Activated CD4-positive, alpha-beta memory T cell treated with anti-CD3 and anti-CD28 coated beads for 36 hours (primary cell): ENCODE measurements at regions of chr11 and their contacts with region 1.

Region 1: DNA sequence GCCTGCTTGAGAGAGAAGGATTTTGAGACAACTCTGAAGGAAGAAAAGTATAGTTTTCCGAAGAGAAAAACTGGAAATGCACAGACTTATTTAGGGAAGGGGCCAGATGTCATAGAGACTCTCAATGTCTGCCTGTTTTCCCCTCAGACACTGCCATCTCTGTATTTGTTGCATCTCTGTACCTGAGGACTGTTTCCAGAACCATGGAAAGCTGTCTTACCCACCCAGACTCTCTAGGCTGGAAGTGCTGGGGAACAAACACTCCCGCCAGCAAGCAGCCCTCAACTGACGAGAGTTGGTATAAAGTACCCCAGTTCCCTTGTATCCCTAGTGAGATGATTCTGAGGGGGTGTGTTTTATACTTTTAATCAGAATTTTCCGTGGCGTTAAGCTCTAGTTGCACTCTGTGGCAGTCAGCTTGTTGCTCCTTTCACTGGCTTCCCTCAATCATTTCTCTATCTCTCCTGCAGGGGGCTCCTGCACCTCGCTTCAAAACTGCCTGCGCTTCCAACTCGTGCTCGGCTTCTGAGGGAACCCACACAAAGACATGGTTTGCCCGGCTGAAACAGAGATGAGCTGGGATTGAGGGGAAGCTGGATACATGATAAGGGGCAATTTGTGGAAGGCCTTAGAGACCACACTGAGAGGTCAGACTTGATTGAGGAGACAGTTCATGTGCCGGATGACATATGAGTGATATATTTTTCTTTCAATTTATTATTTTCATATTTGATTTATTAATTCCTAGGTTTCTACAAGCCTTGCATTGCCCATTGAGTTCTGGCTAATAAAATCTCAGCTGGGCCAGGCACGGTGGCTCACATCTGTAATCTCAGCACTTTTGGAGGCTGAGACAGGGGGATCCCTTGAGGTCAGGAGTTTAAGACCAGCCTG is 36.9 kb upstream of the CLPB start:
- DNase-seq: peak; percentile 70
- H3K4me3 Mint-ChIP-seq: peak overlapping the region; percentile 25
- H3K27ac Mint-ChIP-seq: no peak overlapping the region
- H3K4me1 Mint-ChIP-seq: peaks cover 2% of the 10 kb centered on the region
- H3K27me3 Mint-ChIP-seq: peaks cover 16% of the 10 kb centered on the region

Region 2: DNA sequence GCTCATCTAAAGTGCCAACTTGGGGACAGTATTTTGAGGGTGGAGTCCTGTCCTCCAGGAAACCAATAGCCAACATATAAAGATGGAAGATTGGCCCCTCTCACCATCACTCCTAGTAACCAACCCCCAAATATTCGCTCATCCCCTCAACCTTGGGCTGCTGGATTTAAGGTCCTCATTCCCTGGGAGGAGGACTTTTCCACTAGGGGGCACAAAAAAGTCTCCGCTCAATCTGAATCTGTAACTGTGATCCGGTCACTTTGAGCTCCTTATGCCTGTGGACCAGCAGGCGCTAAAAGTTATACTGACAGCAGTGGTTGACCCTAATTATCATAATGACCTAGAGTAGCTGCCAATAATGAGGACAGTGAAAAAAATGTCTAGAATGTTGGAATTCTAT is 16.5 kb before region 1 on chr11:
- CTCF ChIA-PET with region 1: interaction called, 18 read pairs
- POLR2A ChIA-PET with region 1: no interaction called
- intact Hi-C with region 1: no loop called
- DNase-seq: no peak
- H3K4me3 Mint-ChIP-seq: no peak overlapping the region
- H3K27ac Mint-ChIP-seq: no peak overlapping the region
- H3K4me1 Mint-ChIP-seq: no peaks in the 10 kb centered on the region
- H3K27me3 Mint-ChIP-seq: peaks cover 4% of the 10 kb centered on the region

Region 3: DNA sequence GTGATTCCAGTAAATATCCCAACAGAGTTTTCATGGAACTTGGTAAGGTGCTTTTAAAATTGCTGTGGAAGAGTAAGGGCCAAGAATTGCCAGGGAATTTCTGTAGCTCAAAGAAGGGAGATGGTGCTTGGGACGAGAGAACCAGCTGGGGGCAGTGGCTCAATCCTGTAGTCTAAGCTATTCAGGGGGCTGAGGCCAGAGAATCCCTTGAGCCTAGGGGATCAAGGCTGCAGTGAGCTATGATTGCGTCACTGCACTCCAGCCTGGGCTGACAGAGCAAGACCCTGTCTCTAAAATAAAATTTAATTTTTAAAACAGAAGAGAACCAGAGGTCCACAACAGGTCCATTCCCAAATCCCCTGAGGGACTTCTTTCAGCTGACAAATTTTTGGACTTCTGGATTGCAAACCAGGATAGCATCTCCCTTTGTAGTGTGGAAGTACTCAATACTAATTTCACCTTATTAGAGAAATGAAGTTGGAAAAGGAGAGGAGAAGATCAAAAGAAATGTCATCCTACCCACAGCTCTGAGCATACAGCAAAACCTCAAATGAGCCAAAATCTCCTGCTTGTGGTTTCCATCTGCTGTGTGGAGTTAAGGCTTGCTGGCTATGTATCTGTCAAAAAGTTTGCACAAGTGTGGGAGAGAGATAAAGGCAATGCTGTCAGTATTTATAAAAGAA is 22.3 kb after region 1 on chr11:
- CTCF ChIA-PET with region 1: interaction called, 11 read pairs
- POLR2A ChIA-PET with region 1: no interaction called
- intact Hi-C with region 1: no loop called
- DNase-seq: no peak
- H3K4me3 Mint-ChIP-seq: no peak overlapping the region
- H3K27ac Mint-ChIP-seq: no peak overlapping the region
- H3K4me1 Mint-ChIP-seq: peaks cover 6% of the 10 kb centered on the region
- H3K27me3 Mint-ChIP-seq: no peaks in the 10 kb centered on the region

Region 4: GRCh38 chr11:72553706-72554105 is 82.5 kb after region 1 on chr11:
- CTCF ChIA-PET with region 1: interaction called, 69 read pairs
- POLR2A ChIA-PET with region 1: no interaction called
- intact Hi-C with region 1: loop called (anchors 1 kb)
- DNase-seq: peak; percentile 58
- H3K4me3 Mint-ChIP-seq: no peak overlapping the region
- H3K27ac Mint-ChIP-seq: no peak overlapping the region
- H3K4me1 Mint-ChIP-seq: peaks cover 7% of the 10 kb centered on the region
- H3K27me3 Mint-ChIP-seq: peaks cover 5% of the 10 kb centered on the region

Region 5: DNA sequence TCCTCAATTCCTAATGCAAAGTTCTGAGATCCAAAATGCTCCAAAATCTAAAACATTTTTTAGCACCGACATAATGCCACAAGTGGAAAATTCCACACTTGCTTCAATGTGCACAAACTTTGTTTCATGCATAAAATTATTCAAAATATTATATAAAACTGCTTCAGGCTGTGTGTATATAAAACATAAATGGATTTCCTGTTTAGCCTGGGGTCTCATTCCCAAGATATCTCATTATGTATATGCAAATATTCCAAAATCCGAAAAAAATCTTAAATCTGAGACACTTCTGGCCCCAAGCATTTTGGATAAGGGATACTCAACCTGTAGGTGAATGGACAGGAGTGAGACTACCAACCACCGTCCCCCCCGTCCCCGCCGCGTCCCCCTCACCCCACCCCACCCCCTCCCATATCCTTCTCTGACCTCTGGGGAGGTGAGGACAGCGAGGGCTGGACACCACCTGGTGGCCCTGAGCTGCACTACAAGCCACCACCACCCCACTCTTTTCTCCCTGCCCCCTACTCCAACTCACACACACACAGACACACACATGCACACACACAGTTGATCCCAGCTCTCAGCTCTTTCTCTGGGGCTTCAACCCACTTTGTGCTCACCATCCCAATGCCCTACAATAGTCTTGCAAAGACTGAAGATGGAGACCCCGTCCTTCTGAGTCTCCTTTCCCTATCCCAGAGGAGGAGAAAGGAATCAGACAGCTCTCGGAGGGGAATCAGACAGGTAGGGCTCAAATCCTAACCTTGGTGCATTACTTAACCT is 102.0 kb after region 1 on chr11:
- CTCF ChIA-PET with region 1: interaction called, 38 read pairs
- POLR2A ChIA-PET with region 1: no interaction called
- intact Hi-C with region 1: no loop called
- DNase-seq: peak; percentile 51
- H3K4me3 Mint-ChIP-seq: no peak overlapping the region
- H3K27ac Mint-ChIP-seq: no peak overlapping the region
- H3K4me1 Mint-ChIP-seq: peaks cover 9% of the 10 kb centered on the region
- H3K27me3 Mint-ChIP-seq: peaks cover 9% of the 10 kb centered on the region

Region 6: DNA sequence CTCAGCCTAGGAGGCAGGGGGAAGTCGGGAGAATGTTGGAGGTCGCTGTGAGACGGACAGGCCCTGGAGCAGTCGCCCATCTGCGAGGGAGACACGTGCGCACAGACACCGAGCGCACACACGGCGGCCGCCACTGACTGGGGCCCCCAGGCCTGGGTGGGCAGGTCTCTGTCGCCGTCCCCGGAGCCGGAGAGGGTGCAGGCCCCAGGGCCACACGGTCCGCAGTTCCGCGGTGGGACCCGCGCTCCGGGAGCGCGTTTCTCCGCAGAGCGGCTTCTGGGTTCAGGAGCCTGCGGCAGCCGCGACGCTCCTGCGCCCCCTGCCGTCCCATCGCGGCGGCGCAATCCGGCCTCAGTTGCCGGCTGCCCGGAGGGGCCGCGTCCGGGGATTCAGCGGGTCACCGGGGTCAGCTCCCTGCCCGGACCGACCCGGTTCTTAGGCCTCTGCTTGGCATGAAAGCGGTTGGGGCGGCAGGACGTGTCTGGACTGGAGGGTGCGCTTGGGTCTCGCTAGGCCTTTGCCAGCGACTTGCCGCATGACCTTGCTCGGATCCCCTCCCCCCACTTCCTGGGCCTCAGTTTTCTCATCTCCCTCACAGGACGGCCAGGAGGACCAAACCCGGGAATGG is 171.7 kb after region 1 on chr11:
- CTCF ChIA-PET with region 1: interaction called, 18 read pairs
- POLR2A ChIA-PET with region 1: no interaction called
- intact Hi-C with region 1: no loop called
- DNase-seq: peak; percentile 71
- H3K4me3 Mint-ChIP-seq: peak overlapping the region; percentile 11
- H3K27ac Mint-ChIP-seq: no peak overlapping the region
- H3K4me1 Mint-ChIP-seq: peaks cover 2% of the 10 kb centered on the region
- H3K27me3 Mint-ChIP-seq: peaks cover 1% of the 10 kb centered on the region